Left cardiac atrium (tissue), 4 donors: ENCODE measurements at regions of chr17 and their contacts with region 1.

Region 1: DNA sequence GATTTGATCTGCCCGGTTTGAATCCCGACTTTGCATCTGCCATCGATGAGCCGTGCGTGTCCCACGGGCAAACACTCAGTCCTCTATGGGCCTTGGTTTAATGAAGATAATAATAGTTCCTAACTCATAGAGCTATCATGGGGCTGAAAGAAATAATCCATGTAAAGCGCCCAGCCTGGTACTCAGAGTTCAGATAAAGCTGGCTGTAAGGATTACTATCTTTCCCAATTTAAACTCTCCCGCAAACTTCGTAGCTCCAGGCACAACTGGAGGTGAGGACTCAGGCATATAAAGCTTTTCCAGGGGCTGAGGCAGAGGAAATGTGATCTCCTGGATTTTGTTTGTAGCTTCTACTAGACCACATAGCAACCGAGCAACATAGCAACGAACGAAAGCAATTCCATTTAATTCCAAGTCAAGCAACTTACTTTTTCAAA is 16.3 kb downstream of the ALOX15 start:
- DNase-seq: no peak
- ATAC-seq: peak; percentile 48 to 53

Region 2: DNA sequence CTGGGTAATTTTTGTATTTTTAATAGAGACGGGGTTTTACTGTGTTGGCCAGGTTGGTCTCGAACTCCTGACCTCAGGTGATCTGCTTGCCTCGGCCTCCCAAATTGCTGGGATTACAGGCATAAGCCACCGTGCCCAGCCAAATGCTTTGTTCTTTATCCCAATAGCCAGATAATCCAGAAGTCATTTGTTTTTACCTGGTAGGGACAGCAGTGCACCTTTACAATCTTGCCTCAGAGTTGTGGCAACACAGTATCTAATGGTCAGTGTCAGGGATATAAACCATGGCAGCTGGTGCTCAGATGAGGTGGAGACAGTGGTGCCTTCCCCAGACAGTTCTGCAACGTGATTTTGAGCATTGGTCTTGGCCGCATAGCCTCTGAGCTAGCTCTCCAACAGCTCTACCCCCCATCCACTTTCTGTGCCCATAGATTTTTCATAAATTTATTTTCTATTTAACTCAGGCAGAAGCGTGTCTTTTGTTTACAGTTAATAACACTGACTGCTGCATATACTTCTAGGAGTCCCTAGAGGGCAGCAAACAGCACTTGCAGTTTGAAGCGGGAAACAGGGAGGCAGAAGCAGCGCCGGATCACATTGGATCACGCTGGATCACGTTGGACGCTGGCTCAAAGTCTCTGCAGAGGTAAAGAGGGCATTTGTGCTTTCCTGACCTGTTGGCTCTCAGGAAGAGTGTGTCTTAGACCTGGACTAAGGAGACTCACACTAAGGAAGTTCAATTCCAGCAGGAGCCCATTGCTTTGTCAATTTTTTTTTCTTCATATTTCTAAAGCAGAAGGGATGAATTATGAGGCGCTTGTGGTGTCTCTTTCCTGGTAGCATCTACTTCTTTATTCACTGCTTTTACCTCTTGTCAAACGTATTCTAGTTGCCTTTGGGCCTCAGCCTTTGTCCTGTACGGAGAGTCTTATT is 59.7 kb before region 1 on chr17:
- intact Hi-C with region 1: loop called (anchors 1 to 5 kb)
- DNase-seq: peak; percentile 68
- ATAC-seq: peak; percentile 77 to 90

Region 3: DNA sequence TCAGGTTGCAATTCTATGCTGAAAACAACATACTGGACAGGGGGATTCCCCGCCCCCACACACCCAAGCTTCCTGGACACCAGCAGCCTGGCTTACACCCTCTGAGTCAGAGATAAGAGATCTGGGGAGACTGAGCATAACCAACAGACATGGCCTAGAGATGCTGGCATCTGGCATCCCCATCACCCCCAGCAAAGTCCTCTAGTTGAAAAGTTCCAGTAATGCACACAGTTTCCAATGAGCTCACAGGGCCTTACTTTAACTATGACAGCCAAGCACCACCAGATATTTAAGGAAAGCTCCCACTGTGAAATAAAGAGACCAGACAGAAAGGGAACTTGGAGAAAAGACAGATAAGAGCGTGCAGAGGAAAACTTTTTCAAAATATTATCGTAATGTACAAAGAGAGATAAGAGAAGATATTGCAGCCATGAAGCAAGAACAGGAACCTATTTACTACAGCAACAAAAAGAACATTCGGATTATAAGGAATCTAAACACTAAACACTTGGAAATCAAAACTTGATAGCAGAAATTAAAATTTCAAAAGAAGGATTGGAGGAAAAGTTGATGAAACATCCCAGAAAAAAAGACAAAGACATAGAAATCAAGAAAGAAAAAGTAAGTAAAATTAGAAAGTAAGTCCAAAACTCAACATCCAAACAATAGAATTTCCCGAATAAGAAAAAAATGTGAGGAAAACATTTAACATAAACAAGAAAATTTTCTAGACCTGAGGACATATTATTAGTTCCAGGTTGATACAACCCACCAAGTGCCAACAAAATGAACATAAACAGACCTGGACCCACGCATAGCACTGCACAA is 33.5 kb after region 1 on chr17:
- intact Hi-C with region 1: no loop called
- DNase-seq: no peak
- ATAC-seq: peak in 1 of 2 donors; percentile 72